Ovary (tissue), 10 donors: ENCODE measurements at regions of chr2 and their contacts with region 1.

Region 1: GRCh38 chr2:68441179-68441993 is 25.7 kb downstream of the FBXO48 start:
- DNase-seq: peak; percentile 70 to 88 (median 79)
- H3K4me3 ChIP-seq: no peak overlapping the region
- H3K27ac ChIP-seq: no peak overlapping the region
- H3K4me1 ChIP-seq: no peaks in the 10 kb centered on the region
- H3K27me3 ChIP-seq: no peaks in the 10 kb centered on the region
- CTCF ChIP-seq: peak; percentile 84 to 92 (median 90)
- EP300 ChIP-seq: no peak
- POLR2A ChIP-seq: no peak

Region 2: GRCh38 chr2:68121873-68122679 is 319.3 kb before region 1 on chr2:
- intact Hi-C with region 1: loop called in 3 of 4 experiments (anchors 5 to 10 kb)
- DNase-seq: peak; percentile 83 to 92 (median 92)
- H3K4me3 ChIP-seq: no peak overlapping the region
- H3K27ac ChIP-seq: no peak overlapping the region
- H3K4me1 ChIP-seq: peaks cover 3% of the 10 kb centered on the region
- H3K27me3 ChIP-seq: no peaks in the 10 kb centered on the region
- CTCF ChIP-seq: peak; percentile 74 to 91 (median 88)
- EP300 ChIP-seq: no peak
- POLR2A ChIP-seq: no peak

Region 3: DNA sequence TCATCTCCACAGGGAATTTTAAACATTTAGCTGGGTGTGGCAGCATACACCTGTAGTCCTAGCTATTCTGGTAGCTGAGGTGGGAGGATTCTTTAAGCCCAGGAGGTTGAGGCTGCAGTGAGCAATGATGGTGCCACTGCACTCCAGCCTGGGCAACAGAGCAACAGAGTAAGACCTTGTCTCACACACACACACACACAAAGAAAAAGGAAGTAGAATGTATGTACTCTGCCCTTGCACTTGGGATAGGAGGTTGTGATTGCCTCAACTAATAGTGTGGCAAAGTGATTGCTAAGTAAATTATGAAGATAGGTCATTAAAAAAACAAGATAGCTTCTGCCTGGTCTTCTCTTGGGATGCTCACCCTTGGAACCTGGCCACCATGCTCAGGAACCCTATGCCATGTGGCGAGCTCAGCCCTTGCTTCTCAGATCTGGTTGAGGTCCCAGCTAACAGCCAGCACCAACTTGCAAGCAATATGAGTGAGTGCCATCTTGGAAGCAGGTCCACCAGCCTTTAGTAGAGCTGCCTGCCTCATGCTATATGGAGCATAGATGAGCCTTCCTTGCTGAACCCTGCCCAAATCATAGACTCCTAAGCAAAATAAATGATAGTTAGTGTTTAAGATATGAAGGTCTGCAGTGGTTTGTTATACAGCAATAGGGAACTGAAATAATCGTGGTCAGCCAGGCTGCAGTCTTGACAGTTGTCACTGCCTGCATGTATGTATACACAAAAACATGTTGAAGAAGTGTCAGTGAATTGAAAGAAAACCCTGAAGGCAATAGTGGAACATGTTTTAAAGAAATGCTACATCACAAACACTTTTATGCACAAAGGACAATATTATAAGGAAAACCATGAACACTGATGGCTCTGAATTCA is 313.8 kb before region 1 on chr2:
- intact Hi-C with region 1: loop called in 3 of 4 experiments (anchors 5 to 10 kb)
- DNase-seq: no peak
- H3K4me3 ChIP-seq: no peak overlapping the region
- H3K27ac ChIP-seq: no peak overlapping the region
- H3K4me1 ChIP-seq: peaks cover 1% of the 10 kb centered on the region
- H3K27me3 ChIP-seq: no peaks in the 10 kb centered on the region
- CTCF ChIP-seq: no peak
- EP300 ChIP-seq: no peak
- POLR2A ChIP-seq: no peak

Region 4: GRCh38 chr2:68362069-68362468 is 79.3 kb before region 1 on chr2:
- intact Hi-C with region 1: loop called in 3 of 4 experiments (anchors 5 to 10 kb)
- DNase-seq: peak; percentile 46 to 79 (median 68)
- H3K4me3 ChIP-seq: no peak overlapping the region
- H3K27ac ChIP-seq: no peak overlapping the region
- H3K4me1 ChIP-seq: no peaks in the 10 kb centered on the region
- H3K27me3 ChIP-seq: no peaks in the 10 kb centered on the region
- CTCF ChIP-seq: peak in 2 of 3 donors; percentile 42 to 45
- EP300 ChIP-seq: no peak
- POLR2A ChIP-seq: no peak

Region 5: DNA sequence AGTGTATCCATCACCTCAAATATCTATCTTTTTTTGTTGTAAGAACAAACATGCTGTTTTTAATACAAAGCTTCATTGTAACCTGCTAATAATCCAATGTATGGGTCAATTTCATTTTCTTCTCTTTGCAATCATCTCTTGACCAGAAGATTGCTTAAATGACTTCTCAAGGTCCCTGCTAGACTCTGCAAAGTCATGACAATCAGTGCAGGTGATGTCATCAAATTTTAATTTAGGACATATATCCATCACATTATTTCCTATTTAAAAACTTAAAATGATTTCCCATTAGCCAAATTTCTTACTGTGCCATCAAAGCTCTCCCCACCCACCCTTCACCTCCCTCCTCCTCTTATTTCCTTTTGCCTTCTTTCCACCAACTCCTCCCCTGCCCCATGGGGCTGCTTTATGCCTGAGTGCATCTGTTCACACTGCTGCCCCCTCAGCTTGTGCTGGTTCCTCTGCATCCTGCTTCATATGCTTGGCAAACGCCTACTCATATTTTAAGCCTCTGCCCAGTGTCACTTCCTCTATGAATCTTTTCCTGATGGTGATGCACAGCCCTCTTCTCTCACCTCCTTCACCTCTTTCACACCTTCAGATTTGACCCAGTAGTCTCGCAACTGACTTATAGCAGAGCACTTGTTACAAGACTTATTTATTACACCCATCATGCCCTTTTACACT is 56.0 kb before region 1 on chr2:
- intact Hi-C with region 1: no loop called
- DNase-seq: no peak
- H3K4me3 ChIP-seq: no peak overlapping the region
- H3K27ac ChIP-seq: no peak overlapping the region
- H3K4me1 ChIP-seq: no peaks in the 10 kb centered on the region
- H3K27me3 ChIP-seq: no peaks in the 10 kb centered on the region
- CTCF ChIP-seq: no peak
- EP300 ChIP-seq: no peak
- POLR2A ChIP-seq: no peak